MCF 10A (cell line): ENCODE measurements at regions of chr1 and their contacts with region 1.

Region 1: GRCh38 chr1:8015036-8015808 is 10.9 kb downstream of the ERRFI1 start:
- DNase-seq: peak; percentile 82
- H3K4me3 Mint-ChIP-seq: peak overlapping the region; percentile 88
- H3K27ac Mint-ChIP-seq: peak overlapping the region; percentile 82
- H3K4me1 Mint-ChIP-seq: peaks cover 73% of the 10 kb centered on the region
- H3K27me3 Mint-ChIP-seq: no peaks in the 10 kb centered on the region
- CTCF ChIP-seq: peak; percentile 64

Region 2: DNA sequence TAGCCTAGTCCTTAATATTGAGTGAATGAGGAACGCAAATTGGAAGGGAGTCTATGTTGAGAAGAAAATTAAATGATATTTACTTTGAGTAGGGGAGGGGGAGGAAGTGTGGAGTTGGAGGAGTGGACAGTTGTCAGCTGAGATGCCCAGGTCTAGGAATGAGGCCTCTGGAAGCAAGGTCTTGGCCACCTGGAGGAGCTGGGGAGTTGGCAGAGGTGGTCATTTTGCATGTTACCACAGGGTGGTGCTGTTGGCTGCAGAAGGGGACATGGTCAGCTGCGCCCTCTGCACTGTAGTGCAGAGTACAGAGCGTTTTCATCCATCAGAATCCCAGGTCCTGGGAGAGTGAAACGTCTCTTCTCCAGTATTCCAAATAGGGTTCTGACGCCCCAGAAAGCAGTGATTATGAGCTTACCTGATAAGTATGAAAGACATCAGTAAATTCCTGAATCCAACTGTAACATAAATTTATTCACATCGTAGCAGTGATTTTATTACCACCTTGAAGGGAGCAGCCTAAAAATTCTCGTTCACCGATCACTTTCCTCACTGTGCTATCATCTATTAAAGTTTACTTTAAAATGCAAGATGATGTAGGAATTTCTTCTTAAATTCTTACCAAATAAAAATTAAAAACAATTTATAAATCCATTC is 39.9 kb before region 1 on chr1:
- CTCF ChIA-PET with region 1: interaction called, 32 read pairs
- POLR2A ChIA-PET with region 1: interaction called, 13 read pairs
- intact Hi-C with region 1: loop called (anchors 5 kb)
- DNase-seq: peak; percentile 87
- H3K4me3 Mint-ChIP-seq: no peak overlapping the region
- H3K27ac Mint-ChIP-seq: no peak overlapping the region
- H3K4me1 Mint-ChIP-seq: no peaks in the 10 kb centered on the region
- H3K27me3 Mint-ChIP-seq: no peaks in the 10 kb centered on the region
- CTCF ChIP-seq: peak; percentile 95

Region 3: DNA sequence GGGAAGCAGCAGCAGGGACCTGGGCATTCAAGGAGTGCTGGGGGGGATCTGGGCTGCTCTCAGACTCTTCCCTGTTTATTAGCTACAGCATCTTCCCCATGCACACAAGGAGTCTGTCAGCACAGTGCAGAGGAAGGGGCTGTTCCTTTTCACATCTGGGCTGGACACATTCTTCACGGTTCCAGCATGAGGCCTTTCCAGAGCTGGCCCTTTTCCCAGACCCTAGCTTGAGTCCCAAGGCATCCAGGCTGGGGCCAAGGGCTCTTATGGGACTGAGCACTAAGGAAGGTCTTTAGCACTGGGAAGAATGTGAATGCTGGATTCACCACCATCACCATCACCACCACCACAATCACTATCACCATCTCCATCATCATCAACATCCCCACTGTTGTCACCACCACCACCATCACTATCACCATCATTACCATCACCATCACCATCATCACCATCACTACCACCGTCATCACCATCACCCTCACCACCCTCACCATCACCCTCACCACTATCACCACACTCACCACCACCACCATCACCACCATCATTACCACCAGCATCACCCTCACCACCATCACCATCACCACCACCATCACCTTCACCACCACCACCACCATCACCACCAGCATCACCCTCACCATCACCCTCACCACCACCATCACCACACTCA is 25.3 kb before region 1 on chr1:
- CTCF ChIA-PET with region 1: interaction called, 32 read pairs
- POLR2A ChIA-PET with region 1: interaction called, 15 read pairs
- intact Hi-C with region 1: no loop called
- DNase-seq: no peak
- H3K4me3 Mint-ChIP-seq: no peak overlapping the region
- H3K27ac Mint-ChIP-seq: no peak overlapping the region
- H3K4me1 Mint-ChIP-seq: peaks cover 15% of the 10 kb centered on the region
- H3K27me3 Mint-ChIP-seq: no peaks in the 10 kb centered on the region
- CTCF ChIP-seq: no peak

Region 4: GRCh38 chr1:8047681-8048445 is 32.6 kb after region 1 on chr1:
- CTCF ChIA-PET with region 1: no interaction called
- POLR2A ChIA-PET with region 1: interaction called, 17 read pairs
- intact Hi-C with region 1: no loop called
- DNase-seq: peak; percentile 96
- H3K4me3 Mint-ChIP-seq: no peak overlapping the region
- H3K27ac Mint-ChIP-seq: peak overlapping the region; percentile 92
- H3K4me1 Mint-ChIP-seq: peaks cover 16% of the 10 kb centered on the region
- H3K27me3 Mint-ChIP-seq: no peaks in the 10 kb centered on the region
- CTCF ChIP-seq: no peak

Region 5: GRCh38 chr1:8137481-8138244 is 122.4 kb after region 1 on chr1:
- CTCF ChIA-PET with region 1: interaction called, 8 read pairs
- POLR2A ChIA-PET with region 1: interaction called, 22 read pairs
- intact Hi-C with region 1: no loop called
- DNase-seq: peak; percentile 85
- H3K4me3 Mint-ChIP-seq: peak overlapping the region; percentile 55
- H3K27ac Mint-ChIP-seq: peak overlapping the region; percentile 93
- H3K4me1 Mint-ChIP-seq: peaks cover 44% of the 10 kb centered on the region
- H3K27me3 Mint-ChIP-seq: no peaks in the 10 kb centered on the region
- CTCF ChIP-seq: no peak

Region 6: GRCh38 chr1:8238851-8239305 is 223.7 kb after region 1 on chr1:
- CTCF ChIA-PET with region 1: interaction called, 6 read pairs
- POLR2A ChIA-PET with region 1: interaction called, 6 read pairs
- intact Hi-C with region 1: loop called (anchors 1 kb)
- DNase-seq: peak; percentile 88
- H3K4me3 Mint-ChIP-seq: no peak overlapping the region
- H3K27ac Mint-ChIP-seq: peak overlapping the region; percentile 86
- H3K4me1 Mint-ChIP-seq: peaks cover 14% of the 10 kb centered on the region
- H3K27me3 Mint-ChIP-seq: no peaks in the 10 kb centered on the region
- CTCF ChIP-seq: peak; percentile 37

Region 7: GRCh38 chr1:8314346-8315280 is 299.4 kb after region 1 on chr1:
- CTCF ChIA-PET with region 1: interaction called, 28 read pairs
- POLR2A ChIA-PET with region 1: interaction called, 21 read pairs
- intact Hi-C with region 1: loop called (anchors 1 kb)
- DNase-seq: peak; percentile 85
- H3K4me3 Mint-ChIP-seq: no peak overlapping the region
- H3K27ac Mint-ChIP-seq: no peak overlapping the region
- H3K4me1 Mint-ChIP-seq: peaks cover 15% of the 10 kb centered on the region
- H3K27me3 Mint-ChIP-seq: no peaks in the 10 kb centered on the region
- CTCF ChIP-seq: peak; percentile 95